T-cell (primary cell): ENCODE measurements at regions of chr4 and their contacts with region 1.

Region 1: DNA sequence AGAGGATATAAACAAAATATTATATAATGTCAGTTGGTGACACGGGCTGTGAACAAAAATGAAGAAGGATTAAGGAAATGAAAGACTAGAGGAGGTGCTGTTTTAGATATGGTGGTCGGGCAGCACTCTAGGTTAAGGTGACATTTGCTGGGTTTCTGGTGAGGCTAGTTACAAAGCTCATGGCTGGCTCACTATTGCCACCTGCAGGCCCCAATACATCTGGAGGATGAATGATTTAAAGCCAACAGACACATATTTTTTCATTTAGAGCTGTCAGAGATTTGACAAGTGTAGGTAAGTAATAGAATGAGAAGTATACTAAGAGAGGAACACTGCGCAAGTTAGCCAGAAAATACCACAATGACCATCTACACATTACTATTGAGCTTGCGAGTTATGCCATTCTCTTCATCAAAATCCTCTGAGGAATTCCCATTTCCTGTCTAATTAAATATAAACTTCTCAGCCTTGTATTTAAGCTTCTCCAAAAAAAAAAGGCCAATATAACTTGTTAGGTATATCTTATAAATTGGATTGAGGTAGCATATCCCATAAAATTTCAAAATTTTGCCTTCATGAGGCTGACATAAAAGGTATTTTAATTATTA is 6.4 kb upstream of the FGG start:
- DNase-seq: peak in 32 of 35 experiments; percentile 9 to 59 (median 30)
- ATAC-seq: peak in 3 of 4 experiments; percentile 36 to 62 (median 42)
- H3K4me3 ChIP-seq: no peak overlapping the region
- H3K4me3 Mint-ChIP-seq: no peak overlapping the region
- H3K27ac ChIP-seq: no peak overlapping the region
- H3K27ac Mint-ChIP-seq: no peak overlapping the region
- H3K4me1 ChIP-seq: no peaks in the 10 kb centered on the region
- H3K4me1 Mint-ChIP-seq: peaks cover 7 to 11% (median 10%) of the 10 kb centered on the region in 3 donors
- H3K27me3 ChIP-seq: no peaks in the 10 kb centered on the region
- H3K27me3 Mint-ChIP-seq: peaks cover 2 to 3% of the 10 kb centered on the region in 2 donors

Region 2: GRCh38 chr4:153780876-153781275 is 837.9 kb before region 1 on chr4:
- CTCF ChIA-PET with region 1: no interaction called
- POLR2A ChIA-PET with region 1: no interaction called
- DNase-seq: no peak
- ATAC-seq: no peak
- H3K4me3 ChIP-seq: no peak overlapping the region
- H3K4me3 Mint-ChIP-seq: no peak overlapping the region
- H3K27ac ChIP-seq: no peak overlapping the region
- H3K27ac Mint-ChIP-seq: no peak overlapping the region
- H3K4me1 ChIP-seq: no peaks in the 10 kb centered on the region
- H3K4me1 Mint-ChIP-seq: no peaks in the 10 kb centered on the region
- H3K27me3 ChIP-seq: peaks cover 6 to 13% of the 10 kb centered on the region in 2 experiments
- H3K27me3 Mint-ChIP-seq: peaks cover 48 to 64% of the 10 kb centered on the region in 2 donors

Region 3: GRCh38 chr4:154559494-154560418 is 59.1 kb before region 1 on chr4:
- CTCF ChIA-PET with region 1: interaction called, 7 to 11 read pairs
- POLR2A ChIA-PET with region 1: no interaction called
- DNase-seq: peak in 1 of 35 experiments; percentile 29
- ATAC-seq: no peak
- H3K4me3 ChIP-seq: no peak overlapping the region
- H3K4me3 Mint-ChIP-seq: no peak overlapping the region
- H3K27ac ChIP-seq: no peak overlapping the region
- H3K27ac Mint-ChIP-seq: no peak overlapping the region
- H3K4me1 ChIP-seq: no peaks in the 10 kb centered on the region
- H3K4me1 Mint-ChIP-seq: no peaks in the 10 kb centered on the region
- H3K27me3 ChIP-seq: peaks cover 0 to 2% of the 10 kb centered on the region in 2 experiments
- H3K27me3 Mint-ChIP-seq: peaks cover 2 to 17% of the 10 kb centered on the region in 2 donors

Region 4: GRCh38 chr4:154757713-154758112 is 138.9 kb after region 1 on chr4:
- CTCF ChIA-PET with region 1: no interaction called
- POLR2A ChIA-PET with region 1: no interaction called
- DNase-seq: no peak
- ATAC-seq: no peak
- H3K4me3 ChIP-seq: no peak overlapping the region
- H3K4me3 Mint-ChIP-seq: no peak overlapping the region
- H3K27ac ChIP-seq: no peak overlapping the region
- H3K27ac Mint-ChIP-seq: no peak overlapping the region
- H3K4me1 ChIP-seq: no peaks in the 10 kb centered on the region
- H3K4me1 Mint-ChIP-seq: no peaks in the 10 kb centered on the region
- H3K27me3 ChIP-seq: no peaks in the 10 kb centered on the region
- H3K27me3 Mint-ChIP-seq: peaks cover 0 to 7% of the 10 kb centered on the region in 2 donors